Activated B cell treated with CpG ODN at 0.5 μM for 24 hours (primary cell): ENCODE measurements at regions of chr19 and their contacts with region 1.

Region 1: GRCh38 chr19:2702162-2703076 is at the start of gene GNG7:
- DNase-seq: peak; percentile 99
- ATAC-seq: peak; percentile 99
- H3K4me3 Mint-ChIP-seq: peak within 1 kb of the TSS; percentile 85
- H3K27ac Mint-ChIP-seq: peak within 1 kb of the TSS; percentile 89
- H3K4me1 Mint-ChIP-seq: peaks cover 53% of the 10 kb centered on the region
- H3K27me3 Mint-ChIP-seq: no peaks in the 10 kb centered on the region
- CTCF ChIP-seq: no peak
- total RNA-seq, gene GNG7: 34.8 and 35.4 TPM in 2 replicates

Region 2: DNA sequence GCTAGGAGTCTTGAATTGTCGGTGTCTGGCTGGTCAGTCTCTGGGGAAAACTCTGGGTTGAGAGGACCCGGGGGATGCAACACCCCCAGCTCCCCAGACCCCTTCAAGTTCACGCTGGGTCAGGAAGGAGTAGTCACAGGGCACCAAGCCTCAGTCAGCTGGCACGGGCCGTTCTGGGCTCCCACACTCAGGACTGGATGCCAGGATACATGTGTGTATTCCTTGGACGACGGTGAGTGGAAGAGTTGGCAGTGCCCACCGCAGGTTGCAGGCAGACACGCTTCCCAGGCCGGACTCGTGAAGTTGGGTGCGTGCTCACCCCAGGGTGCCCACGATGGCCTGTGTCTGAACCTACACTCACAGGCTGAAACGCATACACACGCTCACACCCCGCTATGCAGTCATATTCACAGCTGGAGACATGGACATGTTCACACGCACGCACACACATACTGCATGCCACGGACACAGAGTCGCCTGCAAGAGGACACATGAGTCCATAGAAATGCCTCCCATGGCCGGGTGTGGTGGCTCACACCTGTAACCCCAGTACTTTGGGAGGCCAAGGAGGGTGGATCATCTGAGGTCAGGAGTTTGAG is 220.9 kb before region 1 on chr19:
- CTCF ChIA-PET with region 1: no interaction called
- POLR2A ChIA-PET with region 1: interaction called, 23 read pairs
- intact Hi-C with region 1: no loop called
- DNase-seq: no peak
- ATAC-seq: no peak
- H3K4me3 Mint-ChIP-seq: no peak overlapping the region
- H3K27ac Mint-ChIP-seq: no peak overlapping the region
- H3K4me1 Mint-ChIP-seq: peaks cover 38% of the 10 kb centered on the region
- H3K27me3 Mint-ChIP-seq: no peaks in the 10 kb centered on the region
- CTCF ChIP-seq: no peak

Region 3: DNA sequence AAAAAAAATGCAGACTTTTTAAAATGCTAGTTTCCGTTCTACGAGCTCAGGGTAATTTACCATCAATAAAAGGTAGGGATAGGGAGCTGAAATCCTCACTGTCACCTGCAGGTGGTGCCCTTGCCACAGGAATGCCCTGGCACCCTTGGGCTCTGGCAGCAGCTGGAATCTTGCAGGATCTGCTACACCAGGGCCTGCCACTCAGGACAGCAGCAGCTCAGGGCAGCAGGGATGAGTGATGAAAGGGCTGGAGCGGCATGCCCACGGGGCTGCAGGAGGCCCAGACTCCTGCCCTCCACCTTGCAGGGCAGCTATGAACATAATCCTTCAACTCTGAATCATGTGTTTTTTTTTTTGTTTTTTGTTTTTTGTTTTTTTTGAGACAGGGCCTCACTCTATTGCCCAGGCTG is 53.9 kb before region 1 on chr19:
- CTCF ChIA-PET with region 1: interaction called, 25 read pairs
- POLR2A ChIA-PET with region 1: interaction called, 20 read pairs
- intact Hi-C with region 1: no loop called
- DNase-seq: peak; percentile 75
- ATAC-seq: peak; percentile 87
- H3K4me3 Mint-ChIP-seq: no peak overlapping the region
- H3K27ac Mint-ChIP-seq: peak overlapping the region; percentile 35
- H3K4me1 Mint-ChIP-seq: peaks cover 43% of the 10 kb centered on the region
- H3K27me3 Mint-ChIP-seq: no peaks in the 10 kb centered on the region
- CTCF ChIP-seq: no peak

Region 4: DNA sequence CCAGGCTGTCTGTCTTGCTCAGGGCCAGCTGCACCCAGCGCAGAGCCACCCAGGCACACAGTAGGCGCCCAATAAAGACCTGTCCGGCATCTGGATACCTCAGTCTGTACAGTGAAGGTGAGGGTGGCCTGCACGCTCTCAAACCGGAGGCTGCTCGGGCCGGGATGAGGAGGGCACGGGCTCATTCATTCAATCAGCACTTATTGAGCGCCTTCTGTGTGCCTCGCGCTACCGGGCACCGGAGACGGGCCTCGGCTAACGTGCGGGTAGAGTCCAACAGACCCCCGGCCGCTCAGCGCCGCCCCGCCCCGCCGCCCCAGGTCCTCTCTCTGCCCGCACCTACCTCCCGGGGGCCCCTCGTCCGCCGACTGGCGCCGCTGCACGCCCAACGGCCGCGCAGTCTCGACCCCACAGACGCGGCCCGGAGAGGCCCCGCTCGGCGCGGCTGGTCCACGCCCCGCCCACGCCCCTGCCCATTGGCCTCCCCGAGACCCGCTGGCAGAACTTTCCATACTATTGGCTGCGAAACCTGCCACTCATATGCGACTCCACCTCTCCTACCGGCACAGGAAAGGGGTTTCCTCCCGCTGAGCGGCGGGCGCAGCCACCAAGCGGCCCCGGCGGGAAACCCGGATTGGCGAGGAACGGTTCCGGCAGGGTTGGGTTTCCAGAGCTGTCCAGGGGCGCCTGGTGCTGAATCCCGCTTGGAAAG is 37.3 kb after region 1 on chr19 and contains the start of gene SLC39A3:
- CTCF ChIA-PET with region 1: interaction called, 3 read pairs
- POLR2A ChIA-PET with region 1: interaction called, 8 read pairs
- intact Hi-C with region 1: loop called (anchors 1 kb)
- DNase-seq: peak; percentile 94
- ATAC-seq: peak; percentile 100
- H3K4me3 Mint-ChIP-seq: peak within 1 kb of the TSS; percentile 88
- H3K27ac Mint-ChIP-seq: peak within 1 kb of the TSS; percentile 65
- H3K4me1 Mint-ChIP-seq: peaks cover 28% of the 10 kb centered on the region
- H3K27me3 Mint-ChIP-seq: peaks cover 3% of the 10 kb centered on the region
- CTCF ChIP-seq: no peak
- total RNA-seq, gene SLC39A3: 33.8 and 34.3 TPM in 2 replicates

Region 5: GRCh38 chr19:2750808-2751443 is 48.5 kb after region 1 on chr19:
- CTCF ChIA-PET with region 1: interaction called, 3 read pairs
- POLR2A ChIA-PET with region 1: no interaction called
- intact Hi-C with region 1: loop called (anchors 1 kb)
- DNase-seq: no peak
- ATAC-seq: no peak
- H3K4me3 Mint-ChIP-seq: no peak overlapping the region
- H3K27ac Mint-ChIP-seq: no peak overlapping the region
- H3K4me1 Mint-ChIP-seq: peaks cover 12% of the 10 kb centered on the region
- H3K27me3 Mint-ChIP-seq: no peaks in the 10 kb centered on the region
- CTCF ChIP-seq: no peak